GM10248 (cell line): ENCODE measurements at regions of chr2 and their contacts with region 1.

Region 1: DNA sequence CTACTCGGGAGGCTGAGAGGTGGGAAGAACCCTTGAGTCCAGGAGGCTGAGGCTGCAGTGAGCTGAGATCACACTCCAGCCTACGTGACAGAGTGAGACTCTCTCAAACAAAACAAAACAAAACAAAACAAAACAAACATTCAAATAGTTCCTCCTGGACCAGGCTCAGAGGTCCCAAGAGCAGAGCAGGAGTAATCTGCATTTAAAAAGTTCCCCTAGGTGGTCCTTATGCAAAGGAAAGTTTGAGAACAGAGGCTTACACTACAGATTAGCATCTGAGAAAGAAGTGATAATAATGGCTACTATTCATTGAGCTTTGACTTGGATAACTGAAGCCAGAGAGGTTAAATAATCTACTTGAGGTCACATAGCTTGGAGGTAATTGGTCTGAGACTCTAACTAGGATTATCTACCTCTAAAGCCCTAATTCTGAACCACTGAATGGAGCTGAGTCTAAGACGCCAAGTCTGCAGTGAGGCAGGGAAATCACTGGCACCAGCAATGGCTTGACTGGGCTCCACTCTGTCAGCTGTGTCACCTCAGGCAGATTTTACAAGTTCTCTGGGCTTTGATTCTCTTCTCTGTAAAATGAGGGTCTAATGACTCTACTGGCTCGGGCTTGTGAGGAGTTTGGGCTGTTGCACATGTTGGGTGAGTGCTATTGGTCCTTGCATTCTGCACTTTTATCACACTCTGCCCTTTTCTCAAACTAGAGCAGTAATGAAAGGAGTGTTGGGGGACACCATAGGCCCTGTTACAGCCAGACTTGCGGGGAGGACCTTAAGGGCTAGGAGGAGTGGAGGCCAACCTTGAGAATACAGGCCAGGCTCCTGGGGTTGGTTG is 29.2 kb upstream of the DLX2 start:
- DNase-seq: no peak
- CTCF ChIP-seq: no peak

Region 2: DNA sequence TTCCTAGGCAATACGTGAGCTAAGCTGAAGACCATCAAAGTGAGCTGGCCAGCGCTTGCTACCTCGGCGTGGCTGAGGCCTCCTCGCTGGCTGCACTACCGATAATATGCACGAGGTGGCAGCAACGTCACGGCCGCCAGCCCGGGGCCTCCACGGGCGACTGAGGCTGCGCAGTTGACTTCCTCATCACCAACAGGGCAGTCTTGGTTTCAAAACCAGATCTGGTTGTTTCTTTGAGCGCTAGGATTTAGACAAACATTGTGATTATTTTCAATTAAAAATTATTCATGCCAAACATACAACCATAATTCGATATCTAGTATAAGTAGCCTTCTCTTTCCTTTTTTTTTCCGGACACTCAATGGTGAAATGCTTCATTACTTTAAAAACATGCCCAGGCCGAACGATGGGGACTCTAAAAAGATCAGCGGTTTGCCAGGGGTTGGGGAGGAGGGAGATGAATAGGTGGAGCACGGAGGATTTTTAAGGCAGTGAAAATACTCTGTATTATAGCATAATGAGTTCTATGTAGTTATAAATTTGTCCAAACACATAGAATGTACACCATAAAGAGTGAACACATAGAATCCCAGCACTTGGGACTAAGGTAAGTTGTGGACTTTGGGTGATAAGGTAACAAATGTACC is 557.7 kb before region 1 on chr2:
- CTCF ChIA-PET with region 1: interaction called, 16 read pairs
- POLR2A ChIA-PET with region 1: no interaction called
- DNase-seq: peak; percentile 89
- CTCF ChIP-seq: peak; percentile 90

Region 3: GRCh38 chr2:172090044-172090961 is 41.6 kb before region 1 on chr2:
- CTCF ChIA-PET with region 1: no interaction called
- POLR2A ChIA-PET with region 1: no interaction called
- DNase-seq: peak; percentile 22
- CTCF ChIP-seq: no peak